Caco-2 (cell line): ENCODE measurements at regions of chr11 and their contacts with region 1.

Region 1: GRCh38 chr11:120517390-120517761 is 5.8 kb downstream of the GRIK4 start:
- DNase-seq: no peak
- H3K4me3 ChIP-seq: no peak overlapping the region
- H3K4me3 Mint-ChIP-seq: no peak overlapping the region
- H3K27ac Mint-ChIP-seq: peak overlapping the region; percentile 18
- H3K4me1 ChIP-seq: peaks cover 19% of the 10 kb centered on the region
- H3K4me1 Mint-ChIP-seq: peaks cover 20% of the 10 kb centered on the region
- H3K27me3 ChIP-seq: no peaks in the 10 kb centered on the region
- H3K27me3 Mint-ChIP-seq: peaks cover 2% of the 10 kb centered on the region
- CTCF ChIP-seq: no peak

Region 2: DNA sequence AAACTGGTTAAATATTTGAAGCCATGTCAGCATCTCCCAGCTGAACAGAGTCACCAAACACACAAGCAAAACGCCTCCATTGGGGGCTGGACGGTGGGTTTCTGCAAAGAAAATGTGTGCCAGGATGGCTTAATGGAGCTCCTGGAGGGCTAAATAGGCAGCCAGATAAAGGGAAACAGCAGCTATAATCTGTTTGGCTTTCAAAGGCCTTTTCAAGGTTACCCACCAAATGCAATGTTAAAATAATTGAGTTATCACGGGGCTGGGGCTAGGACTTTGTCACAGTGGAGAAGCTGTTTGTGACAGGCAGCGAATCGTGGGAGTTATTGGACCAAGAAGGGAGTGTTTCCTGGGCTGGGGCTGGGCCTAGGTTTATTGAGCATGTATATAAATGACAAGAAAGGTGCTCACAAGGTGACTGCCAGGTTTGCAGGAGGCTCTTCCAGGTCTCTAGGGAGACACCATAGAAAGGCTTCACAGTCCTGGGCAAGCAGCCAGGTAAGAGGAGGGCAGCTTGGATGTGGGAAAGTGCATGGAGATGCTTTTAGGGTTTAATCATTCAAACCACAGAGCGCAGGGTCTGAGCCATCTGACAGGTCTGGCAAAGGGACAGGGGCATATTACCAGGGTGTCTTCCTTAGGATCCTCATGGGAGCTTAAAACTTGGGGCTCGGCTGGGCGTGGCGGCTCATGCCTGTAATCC is 22.4 kb after region 1 on chr11:
- CTCF ChIA-PET with region 1: interaction called, 5 read pairs
- POLR2A ChIA-PET with region 1: no interaction called
- intact Hi-C with region 1: loop called (anchors 2 kb)
- DNase-seq: no peak
- H3K4me3 ChIP-seq: no peak overlapping the region
- H3K4me3 Mint-ChIP-seq: no peak overlapping the region
- H3K27ac Mint-ChIP-seq: peak overlapping the region; percentile 65
- H3K4me1 ChIP-seq: peaks cover 19% of the 10 kb centered on the region
- H3K4me1 Mint-ChIP-seq: peaks cover 19% of the 10 kb centered on the region
- H3K27me3 ChIP-seq: no peaks in the 10 kb centered on the region; the same call in 1 of the 2 replicates
- H3K27me3 Mint-ChIP-seq: no peaks in the 10 kb centered on the region
- CTCF ChIP-seq: no peak

Region 3: GRCh38 chr11:120564573-120565311 is 47.4 kb after region 1 on chr11:
- CTCF ChIA-PET with region 1: no interaction called
- POLR2A ChIA-PET with region 1: no interaction called
- intact Hi-C with region 1: no loop called
- DNase-seq: peak in 1 of 2 experiments; percentile 25
- H3K4me3 ChIP-seq: peak overlapping the region; percentile 27
- H3K4me3 Mint-ChIP-seq: no peak overlapping the region
- H3K27ac Mint-ChIP-seq: no peak overlapping the region
- H3K4me1 ChIP-seq: peaks cover 7% of the 10 kb centered on the region
- H3K4me1 Mint-ChIP-seq: peaks cover 17% of the 10 kb centered on the region
- H3K27me3 ChIP-seq: no peaks in the 10 kb centered on the region
- H3K27me3 Mint-ChIP-seq: no peaks in the 10 kb centered on the region
- CTCF ChIP-seq: no peak